HepG2 (cell line): ENCODE measurements at regions of chr13 and their contacts with region 1.

Region 1: DNA sequence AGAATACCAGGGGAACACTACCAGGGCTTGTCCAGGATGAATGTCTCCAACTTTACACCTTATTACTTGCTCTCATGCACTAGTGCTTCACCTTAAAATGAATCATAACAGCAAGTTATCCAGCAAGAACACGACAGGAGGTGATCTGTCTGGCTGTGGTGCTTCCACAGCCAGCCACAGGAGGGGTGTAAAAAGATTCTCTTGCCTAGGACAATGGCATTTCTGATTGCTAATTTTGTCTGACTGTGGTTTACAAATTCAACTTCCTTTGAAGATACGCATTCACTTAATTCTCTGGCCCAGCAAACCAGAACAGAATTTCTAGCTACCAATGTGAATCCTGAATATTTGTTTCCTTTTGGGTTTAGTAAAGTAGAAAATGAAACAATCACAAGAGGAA is 23.1 kb upstream of the COG3 start:
- DNase-seq: peak; percentile 70
- ATAC-seq: peak; percentile 70
- H3K4me3 ChIP-seq: peak overlapping the region in 2 of 3 experiments; percentile 17 to 58; a peak in 3 of 6 replicates
- H3K27ac ChIP-seq: peak overlapping the region; percentile 86
- H3K4me1 ChIP-seq: peaks cover 92% of the 10 kb centered on the region
- H3K27me3 ChIP-seq: no peaks in the 10 kb centered on the region
- CTCF ChIP-seq: peak; percentile 60
- EP300 ChIP-seq: no peak
- POLR2A ChIP-seq: no peak
- RAD21 ChIP-seq: peak; percentile 54; the same call in 1 of the 2 replicates

Region 2: DNA sequence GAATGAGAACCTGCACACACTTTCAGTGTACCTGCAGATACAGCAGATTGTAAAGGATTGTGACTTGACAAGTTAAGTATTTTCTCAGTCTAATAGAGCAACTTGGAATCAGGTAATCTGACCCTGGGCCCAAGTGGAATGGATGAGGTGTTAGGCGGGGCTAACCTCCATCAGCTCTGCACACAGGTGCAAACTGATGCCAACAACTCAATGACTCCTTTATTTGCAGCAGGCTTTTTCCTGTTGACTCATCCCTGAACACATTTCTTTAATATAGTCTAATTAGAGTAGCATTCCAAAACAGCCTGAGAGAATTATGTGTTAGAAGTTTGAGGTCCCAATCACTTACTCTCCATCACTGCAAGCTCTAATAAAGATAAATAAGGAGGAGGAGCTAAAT is 149.5 kb before region 1 on chr13:
- CTCF ChIA-PET with region 1: no interaction called
- POLR2A ChIA-PET with region 1: no interaction called
- in situ Hi-C with region 1: no loop called
- intact Hi-C with region 1: no loop called
- DNase-seq: no peak
- ATAC-seq: no peak
- H3K4me3 ChIP-seq: no peak overlapping the region
- H3K27ac ChIP-seq: no peak overlapping the region
- H3K4me1 ChIP-seq: no peaks in the 10 kb centered on the region
- H3K27me3 ChIP-seq: no peaks in the 10 kb centered on the region
- CTCF ChIP-seq: no peak
- EP300 ChIP-seq: no peak
- POLR2A ChIP-seq: no peak
- RAD21 ChIP-seq: no peak

Region 3: DNA sequence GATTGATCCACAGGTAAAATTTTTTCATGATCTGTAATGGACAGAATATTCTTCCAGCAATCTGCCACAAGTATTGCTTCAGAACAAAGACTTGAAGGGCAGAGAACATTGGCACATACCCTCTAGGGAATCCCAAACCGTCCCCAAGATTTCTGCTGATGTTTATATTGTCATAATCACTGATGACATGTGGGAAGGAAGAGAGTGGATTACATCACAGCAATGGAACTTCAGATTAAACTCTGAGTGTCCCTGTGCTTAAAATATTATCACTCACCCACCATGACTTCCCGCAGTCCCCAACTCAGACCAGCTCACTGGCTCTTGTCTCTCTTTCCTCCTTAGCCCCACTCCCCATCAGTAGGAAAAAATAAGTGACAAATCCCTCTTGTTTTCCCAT is 92.2 kb before region 1 on chr13:
- CTCF ChIA-PET with region 1: no interaction called
- POLR2A ChIA-PET with region 1: no interaction called
- in situ Hi-C with region 1: no loop called
- intact Hi-C with region 1: no loop called
- DNase-seq: no peak
- ATAC-seq: no peak
- H3K4me3 ChIP-seq: no peak overlapping the region
- H3K27ac ChIP-seq: no peak overlapping the region
- H3K4me1 ChIP-seq: no peaks in the 10 kb centered on the region
- H3K27me3 ChIP-seq: no peaks in the 10 kb centered on the region
- CTCF ChIP-seq: no peak
- EP300 ChIP-seq: no peak
- POLR2A ChIP-seq: no peak
- RAD21 ChIP-seq: no peak

Region 4: DNA sequence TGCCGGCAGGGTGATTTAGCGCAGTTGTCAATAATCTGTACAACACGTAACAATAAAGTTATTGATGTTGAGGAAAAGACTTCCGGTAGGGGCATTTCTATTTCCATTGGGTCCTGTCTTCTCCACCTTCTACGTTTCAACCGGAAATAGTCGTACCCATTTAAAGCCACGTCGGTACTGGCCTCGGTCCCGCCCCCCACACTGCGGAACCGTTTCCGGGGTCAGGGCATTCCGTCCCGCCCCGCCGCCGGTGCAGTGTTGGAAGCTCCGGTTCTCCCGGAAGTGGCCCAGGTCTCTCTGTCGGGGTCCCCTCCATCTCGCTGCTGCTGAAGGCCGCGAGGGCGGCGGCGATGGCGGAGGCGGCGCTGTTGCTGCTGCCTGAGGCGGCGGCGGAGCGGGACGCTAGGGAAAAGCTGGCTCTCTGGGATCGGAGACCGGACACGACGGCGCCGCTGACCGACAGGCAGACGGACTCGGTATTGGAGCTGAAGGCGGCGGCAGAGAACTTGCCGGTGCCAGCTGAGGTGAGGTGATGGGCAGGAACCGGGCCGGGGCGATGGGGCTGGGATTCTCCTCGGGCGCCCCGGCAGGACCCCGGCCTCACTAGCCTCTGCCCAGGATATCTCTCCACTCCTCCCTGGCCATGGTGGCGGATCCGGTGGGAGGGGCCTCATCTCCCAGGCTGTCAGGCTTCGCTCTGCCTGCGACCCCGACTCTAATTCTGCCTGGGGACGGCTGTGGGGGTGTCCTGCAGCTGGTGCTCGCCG is 23.2 kb after region 1 on chr13 and contains the start of gene COG3:
- CTCF ChIA-PET with region 1: interaction called, 6 read pairs
- POLR2A ChIA-PET with region 1: interaction called, 30 read pairs
- in situ Hi-C with region 1: no loop called
- intact Hi-C with region 1: loop called (anchors 2 kb)
- DNase-seq: peak; percentile 99
- ATAC-seq: peak; percentile 95
- H3K4me3 ChIP-seq: peak within 1 kb of the TSS; percentile 76 to 96 (median 91)
- H3K27ac ChIP-seq: peak within 1 kb of the TSS; percentile 89
- H3K4me1 ChIP-seq: peaks cover 42% of the 10 kb centered on the region
- H3K27me3 ChIP-seq: no peaks in the 10 kb centered on the region; a peak in 1 of 5 replicates
- CTCF ChIP-seq: peak; percentile 47; the same call in 1 of the 2 replicates
- EP300 ChIP-seq: peak; percentile 20 to 34; a peak in 1 of 4 replicates
- POLR2A ChIP-seq: peak; percentile 71 to 75
- RAD21 ChIP-seq: no peak; the same call in 1 of the 2 replicates
- total RNA-seq, gene COG3: 47.5 and 47.8 TPM in 2 replicates